HEK293 (cell line): ENCODE measurements at regions of chr5 and their contacts with region 1.

Region 1: DNA sequence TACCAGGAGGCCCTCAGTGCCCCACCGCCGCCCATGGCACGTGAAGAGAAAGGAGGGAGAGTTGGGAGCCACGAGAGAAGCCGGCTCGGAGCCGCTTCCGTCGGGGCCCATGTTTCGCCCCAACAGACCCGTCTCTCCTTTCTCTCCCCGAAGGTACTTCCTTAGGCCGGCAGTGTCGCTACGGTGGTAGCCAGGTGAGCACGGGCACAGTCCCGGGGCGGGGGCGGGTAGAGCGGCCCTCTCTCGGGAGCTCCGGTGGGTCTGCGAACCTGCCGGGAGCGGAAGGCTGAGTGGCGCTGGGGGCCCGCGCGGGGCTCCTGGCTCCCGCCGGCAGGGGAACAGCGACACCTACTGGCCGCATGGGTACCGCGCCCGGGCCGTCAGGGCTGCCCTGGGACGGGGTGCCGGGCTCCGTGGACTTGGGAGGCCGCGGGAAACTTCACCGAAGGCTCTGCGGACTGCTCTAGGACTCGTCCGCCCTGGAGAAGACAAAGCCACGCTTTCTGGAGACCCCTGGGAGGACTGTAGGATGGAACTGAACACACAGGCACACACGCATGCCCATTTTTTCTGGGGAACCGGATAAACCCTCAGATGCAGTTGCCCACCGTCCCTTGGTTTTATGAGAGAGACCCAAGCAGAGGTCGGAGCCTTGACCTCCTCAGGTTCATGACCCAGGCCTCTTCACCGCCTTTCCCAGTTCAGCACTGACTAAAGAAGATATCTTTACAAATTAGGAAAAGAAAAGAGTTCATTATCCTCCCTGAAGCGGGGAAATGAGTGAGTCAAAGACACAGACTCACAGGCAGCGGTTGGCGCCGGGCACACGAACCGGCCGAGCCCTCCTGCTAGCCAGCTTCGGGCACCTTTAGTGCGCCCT is 202.5 kb downstream of the MEF2C start:
- H3K4me3 ChIP-seq: peak overlapping the region; percentile 35
- H3K27ac ChIP-seq: peak overlapping the region; percentile 80; the same call in 1 of the 2 replicates
- H3K4me1 ChIP-seq: peaks cover 3% of the 10 kb centered on the region
- CTCF ChIP-seq: peak; percentile 95

Region 2: GRCh38 chr5:87780831-87781760 is 899.4 kb before region 1 on chr5:
- CTCF ChIA-PET with region 1: interaction called, 19 read pairs
- POLR2A ChIA-PET with region 1: interaction called, 3 read pairs
- H3K4me3 ChIP-seq: no peak overlapping the region
- H3K27ac ChIP-seq: no peak overlapping the region
- H3K4me1 ChIP-seq: no peaks in the 10 kb centered on the region
- CTCF ChIP-seq: peak; percentile 78

Region 3: DNA sequence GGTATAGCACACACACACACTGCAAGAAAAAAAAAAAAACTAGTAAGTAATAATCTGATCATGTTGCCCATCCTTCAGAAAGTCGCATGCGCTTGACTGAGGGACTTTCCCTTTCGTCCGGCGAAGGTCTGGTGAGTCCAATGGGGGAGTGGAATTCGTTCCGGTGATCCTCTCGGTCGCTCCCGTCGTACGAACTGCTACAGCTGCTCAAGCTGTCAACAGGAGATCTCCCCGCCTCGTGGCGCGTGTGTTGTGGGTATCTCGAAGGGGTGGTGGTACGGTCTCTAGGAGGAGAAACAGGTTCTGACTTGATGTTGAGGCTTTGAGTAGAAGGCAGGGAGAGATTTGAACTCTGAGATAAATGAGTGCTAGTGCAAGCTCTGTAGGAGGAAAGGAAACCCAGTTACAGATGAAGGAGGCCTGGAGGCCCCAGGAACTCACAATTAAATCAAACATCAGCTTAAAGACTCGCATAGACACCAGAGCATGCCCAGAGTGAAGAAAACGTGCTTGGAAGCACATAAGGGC is 42.1 kb after region 1 on chr5:
- CTCF ChIA-PET with region 1: no interaction called
- POLR2A ChIA-PET with region 1: no interaction called
- H3K4me3 ChIP-seq: no peak overlapping the region
- H3K27ac ChIP-seq: no peak overlapping the region
- H3K4me1 ChIP-seq: peaks cover 7% of the 10 kb centered on the region
- CTCF ChIP-seq: no peak